ENCODE measurements at regions of chr2 and their contacts with region 1.

Region 1: GRCh38 chr2:237572021-237572741 is 5.8 kb downstream of the PRLH start:
- DNase-seq: peak; percentile 34
- ATAC-seq: peak; percentile 99
- H3K4me3 ChIP-seq: no peak overlapping the region
- H3K27ac ChIP-seq: no peak overlapping the region
- H3K4me1 ChIP-seq: no peaks in the 10 kb centered on the region
- H3K27me3 ChIP-seq: peaks cover 0 to 2% of the 10 kb centered on the region in 2 experiments; a peak in 1 of 4 replicates
- CTCF ChIP-seq: peak; percentile 94 to 99 (median 95); a peak in 5 of 6 replicates
- EP300 ChIP-seq: no peak
- POLR2A ChIP-seq: no peak
- RAD21 ChIP-seq: peak; percentile 99

Region 2: GRCh38 chr2:237154082-237154638 is 418.0 kb before region 1 on chr2:
- CTCF ChIA-PET with region 1: interaction called, 15 read pairs
- POLR2A ChIA-PET with region 1: interaction called, 3 read pairs
- RAD21 ChIA-PET with region 1: interaction called, 10 read pairs
- SMC1A ChIA-PET with region 1: interaction called, 8 read pairs
- in situ Hi-C with region 1: loop called (anchors 5 kb)
- intact Hi-C with region 1: loop called (anchors 1 kb)
- DNase-seq: no peak
- ATAC-seq: peak; percentile 61
- H3K4me3 ChIP-seq: no peak overlapping the region
- H3K27ac ChIP-seq: no peak overlapping the region
- H3K4me1 ChIP-seq: peaks cover 16% of the 10 kb centered on the region
- H3K27me3 ChIP-seq: no peaks in the 10 kb centered on the region
- CTCF ChIP-seq: peak; percentile 75 to 81 (median 79)
- EP300 ChIP-seq: no peak
- POLR2A ChIP-seq: no peak
- RAD21 ChIP-seq: peak; percentile 98

Region 3: DNA sequence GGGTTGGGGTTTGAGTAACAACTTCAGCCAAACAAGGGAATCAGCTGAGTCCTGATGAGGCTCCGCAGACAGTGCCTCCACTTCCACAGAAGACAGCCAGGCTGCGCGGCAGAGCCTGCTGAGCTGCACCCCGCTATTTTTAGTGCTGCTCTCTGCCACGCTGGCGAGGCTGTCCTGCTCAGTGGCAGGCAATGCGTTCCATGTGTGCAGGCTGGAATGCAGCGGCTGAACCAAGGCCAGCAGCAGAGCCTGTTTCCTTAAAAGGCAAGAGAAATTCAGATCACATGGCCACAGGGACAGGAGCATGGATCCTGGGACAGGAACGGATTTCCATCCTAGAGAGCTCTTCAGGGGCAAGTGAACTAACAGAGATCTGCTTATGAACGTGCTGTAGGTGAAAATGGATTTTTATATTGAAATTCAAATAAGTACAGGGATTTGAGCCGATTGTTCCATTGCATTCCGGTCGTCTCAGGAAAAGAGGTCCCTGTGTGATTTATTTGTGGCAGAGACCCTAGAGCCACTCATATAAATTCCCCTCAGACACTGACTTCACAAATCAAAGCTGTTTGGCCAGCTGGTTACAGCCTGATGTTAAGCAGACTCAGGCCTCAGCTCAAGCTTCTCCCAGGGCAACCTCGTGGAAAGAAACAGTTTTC is 256.9 kb before region 1 on chr2:
- CTCF ChIA-PET with region 1: no interaction called
- POLR2A ChIA-PET with region 1: no interaction called
- RAD21 ChIA-PET with region 1: no interaction called
- SMC1A ChIA-PET with region 1: no interaction called
- in situ Hi-C with region 1: no loop called
- intact Hi-C with region 1: no loop called
- DNase-seq: no peak
- ATAC-seq: no peak
- H3K4me3 ChIP-seq: no peak overlapping the region
- H3K27ac ChIP-seq: no peak overlapping the region
- H3K4me1 ChIP-seq: no peaks in the 10 kb centered on the region
- H3K27me3 ChIP-seq: peaks cover 0 to 1% of the 10 kb centered on the region in 2 experiments; a peak in 1 of 4 replicates
- CTCF ChIP-seq: no peak
- EP300 ChIP-seq: no peak
- POLR2A ChIP-seq: no peak
- RAD21 ChIP-seq: no peak

Region 4: DNA sequence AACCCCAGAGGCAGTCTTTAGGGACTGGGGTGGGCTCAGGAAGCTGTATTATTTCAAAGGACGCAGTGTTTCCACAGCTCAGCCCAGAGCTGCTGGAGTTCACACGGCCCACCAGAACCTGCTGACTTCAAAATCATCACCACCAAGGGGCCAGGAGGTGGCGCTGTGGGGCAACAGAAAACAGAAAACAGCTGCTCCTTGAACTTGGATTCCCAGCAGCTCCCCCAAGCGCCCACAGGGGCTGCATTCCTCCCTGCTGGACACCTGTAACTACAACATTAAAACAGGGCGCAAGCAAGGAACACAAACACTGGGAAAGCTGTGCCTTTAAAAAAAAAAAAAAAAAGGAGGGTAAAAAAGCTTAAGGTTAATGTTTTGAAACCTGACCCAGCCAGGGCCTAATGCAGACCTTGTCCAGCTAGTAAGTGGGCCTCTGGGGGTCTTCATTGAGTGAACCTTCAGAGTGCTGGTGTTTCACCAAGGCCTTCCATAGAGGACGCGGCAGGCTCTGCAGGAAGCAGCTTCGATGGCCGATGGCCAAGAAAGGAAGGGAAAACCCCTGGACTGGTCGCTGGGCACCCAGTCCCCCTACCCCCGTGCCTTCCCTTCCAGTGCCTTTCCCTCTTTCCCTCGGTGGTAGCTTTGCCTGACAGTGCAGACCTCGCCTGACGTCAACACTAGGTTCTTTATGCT is 59.3 kb before region 1 on chr2:
- CTCF ChIA-PET with region 1: interaction called, 364 read pairs
- POLR2A ChIA-PET with region 1: interaction called, 11 read pairs
- RAD21 ChIA-PET with region 1: interaction called, 300 read pairs
- SMC1A ChIA-PET with region 1: interaction called, 190 read pairs
- in situ Hi-C with region 1: loop called (anchors 5 kb)
- intact Hi-C with region 1: loop called (anchors 1 kb)
- DNase-seq: peak; percentile 28
- ATAC-seq: peak; percentile 97
- H3K4me3 ChIP-seq: no peak overlapping the region
- H3K27ac ChIP-seq: no peak overlapping the region
- H3K4me1 ChIP-seq: no peaks in the 10 kb centered on the region
- H3K27me3 ChIP-seq: peaks cover 0 to 2% of the 10 kb centered on the region in 2 experiments; a peak in 2 of 4 replicates
- CTCF ChIP-seq: peak; percentile 85 to 99 (median 88); a peak in 5 of 6 replicates
- EP300 ChIP-seq: no peak
- POLR2A ChIP-seq: no peak
- RAD21 ChIP-seq: peak; percentile 96

Region 5: DNA sequence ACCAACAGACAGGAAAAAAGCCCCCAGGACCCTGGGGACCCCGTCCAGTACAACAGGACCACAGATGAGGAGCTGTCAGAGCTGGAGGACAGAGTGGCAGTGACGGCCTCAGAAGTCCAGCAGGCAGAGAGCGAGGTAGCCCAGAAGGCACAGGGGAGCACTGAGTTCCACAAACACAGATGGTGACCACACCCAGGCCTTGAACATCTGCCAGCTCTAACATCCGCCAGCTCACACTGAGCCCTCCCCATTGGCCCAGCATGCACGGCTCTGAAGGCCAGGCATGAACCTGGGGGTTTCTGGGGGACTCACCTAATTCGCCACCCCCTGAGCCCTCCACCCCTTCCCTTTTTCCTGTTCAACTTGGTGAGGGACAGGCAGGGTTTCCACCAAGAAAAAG is 31.4 kb before region 1 on chr2:
- CTCF ChIA-PET with region 1: interaction called, 9 read pairs
- POLR2A ChIA-PET with region 1: no interaction called
- RAD21 ChIA-PET with region 1: interaction called, 13 read pairs
- SMC1A ChIA-PET with region 1: interaction called, 9 read pairs
- in situ Hi-C with region 1: no loop called
- intact Hi-C with region 1: no loop called
- DNase-seq: no peak
- ATAC-seq: peak; percentile 75
- H3K4me3 ChIP-seq: no peak overlapping the region
- H3K27ac ChIP-seq: no peak overlapping the region
- H3K4me1 ChIP-seq: peaks cover 6% of the 10 kb centered on the region; the same call in 1 of the 2 replicates
- H3K27me3 ChIP-seq: peaks cover 0 to 3% of the 10 kb centered on the region in 2 experiments; a peak in 1 of 4 replicates
- CTCF ChIP-seq: no peak
- EP300 ChIP-seq: no peak
- POLR2A ChIP-seq: no peak
- RAD21 ChIP-seq: no peak

Region 6: GRCh38 chr2:237600205-237600846 is 28.1 kb after region 1 on chr2:
- CTCF ChIA-PET with region 1: interaction called, 11 read pairs
- POLR2A ChIA-PET with region 1: no interaction called
- RAD21 ChIA-PET with region 1: interaction called, 6 read pairs
- SMC1A ChIA-PET with region 1: no interaction called
- in situ Hi-C with region 1: no loop called
- intact Hi-C with region 1: no loop called
- DNase-seq: no peak
- ATAC-seq: peak; percentile 39
- H3K4me3 ChIP-seq: no peak overlapping the region
- H3K27ac ChIP-seq: no peak overlapping the region
- H3K4me1 ChIP-seq: peaks cover 8% of the 10 kb centered on the region
- H3K27me3 ChIP-seq: no peaks in the 10 kb centered on the region; a peak in 1 of 4 replicates
- CTCF ChIP-seq: peak in 1 of 3 experiments; percentile 17; a peak in 1 of 6 replicates
- EP300 ChIP-seq: no peak
- POLR2A ChIP-seq: no peak
- RAD21 ChIP-seq: peak; percentile 30; the same call in 1 of the 2 replicates

Region 7: DNA sequence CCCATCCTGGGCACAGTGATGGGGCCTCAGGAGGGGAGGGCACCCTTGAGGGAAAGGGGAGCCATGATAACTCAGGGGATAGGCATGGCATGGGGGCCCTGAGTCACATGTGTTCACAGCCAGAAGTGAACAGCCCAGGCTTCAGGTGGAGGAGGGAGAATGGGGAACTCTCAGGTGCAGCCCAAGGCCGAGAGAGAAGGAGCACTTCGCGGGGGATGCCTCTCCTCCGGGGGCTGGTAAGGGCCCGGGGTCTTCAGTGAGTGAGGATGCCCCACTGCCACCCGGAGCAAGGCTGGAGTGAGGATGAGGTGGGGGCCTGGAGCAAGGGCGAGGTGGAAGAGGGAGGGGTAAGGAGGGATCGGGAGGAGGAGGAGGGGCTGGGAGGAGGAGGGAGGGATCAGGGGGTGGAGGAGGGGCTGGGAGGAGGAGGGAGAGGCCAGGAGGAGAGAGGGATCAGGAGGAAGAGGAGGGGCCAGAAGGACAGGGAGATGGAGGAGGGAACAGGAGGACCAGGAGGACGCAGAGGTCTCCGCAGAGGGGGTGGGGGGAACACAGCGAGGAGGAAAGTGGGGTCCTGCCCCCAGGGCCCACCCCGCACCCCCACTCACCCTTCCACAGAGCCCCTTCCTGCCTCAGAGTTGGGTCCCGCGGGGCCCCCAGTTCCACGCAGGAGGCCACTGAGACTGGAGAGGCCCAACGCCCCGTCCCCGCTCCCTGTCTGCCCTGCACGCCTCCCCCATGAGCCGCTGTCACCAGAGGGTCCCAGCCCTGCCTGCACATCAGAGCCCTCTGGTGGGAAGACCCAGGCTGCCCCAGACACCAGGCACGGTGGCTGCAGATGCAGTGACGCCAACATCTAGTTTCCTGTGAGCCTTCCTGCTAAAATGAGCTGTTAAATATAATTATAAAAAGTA is 330.0 kb after region 1 on chr2:
- CTCF ChIA-PET with region 1: no interaction called
- POLR2A ChIA-PET with region 1: no interaction called
- RAD21 ChIA-PET with region 1: no interaction called
- SMC1A ChIA-PET with region 1: no interaction called
- in situ Hi-C with region 1: no loop called
- intact Hi-C with region 1: no loop called
- DNase-seq: no peak
- ATAC-seq: no peak
- H3K4me3 ChIP-seq: no peak overlapping the region
- H3K27ac ChIP-seq: no peak overlapping the region
- H3K4me1 ChIP-seq: peaks cover 31% of the 10 kb centered on the region
- H3K27me3 ChIP-seq: no peaks in the 10 kb centered on the region
- CTCF ChIP-seq: no peak
- EP300 ChIP-seq: no peak
- POLR2A ChIP-seq: no peak
- RAD21 ChIP-seq: no peak

Measured in GM12878 (cell line).